WTC11 (cell line): ENCODE measurements at regions of chr18 and their contacts with region 1.

Region 1: GRCh38 chr18:46660955-46661749 is 4.1 kb upstream of the LOXHD1 start:
- DNase-seq: peak; percentile 67
- ATAC-seq: peak; percentile 62
- H3K4me3 Mint-ChIP-seq: no peak overlapping the region
- H3K27ac Mint-ChIP-seq: no peak overlapping the region
- H3K4me1 Mint-ChIP-seq: peaks cover 19% of the 10 kb centered on the region
- H3K27me3 Mint-ChIP-seq: peaks cover 7% of the 10 kb centered on the region
- CTCF ChIP-seq: no peak

Region 2: GRCh38 chr18:46148810-46149209 is 512.3 kb before region 1 on chr18:
- CTCF ChIA-PET with region 1: interaction called, 15 read pairs
- POLR2A ChIA-PET with region 1: no interaction called
- DNase-seq: peak; percentile 66
- ATAC-seq: peak; percentile 67
- H3K4me3 Mint-ChIP-seq: no peak overlapping the region
- H3K27ac Mint-ChIP-seq: 0 out of 2 replicates have a peak overlapping the region, but pooled peaks have one; percentile 20
- H3K4me1 Mint-ChIP-seq: peaks cover 29% of the 10 kb centered on the region
- H3K27me3 Mint-ChIP-seq: no peaks in the 10 kb centered on the region
- CTCF ChIP-seq: peak; percentile 68

Region 3: DNA sequence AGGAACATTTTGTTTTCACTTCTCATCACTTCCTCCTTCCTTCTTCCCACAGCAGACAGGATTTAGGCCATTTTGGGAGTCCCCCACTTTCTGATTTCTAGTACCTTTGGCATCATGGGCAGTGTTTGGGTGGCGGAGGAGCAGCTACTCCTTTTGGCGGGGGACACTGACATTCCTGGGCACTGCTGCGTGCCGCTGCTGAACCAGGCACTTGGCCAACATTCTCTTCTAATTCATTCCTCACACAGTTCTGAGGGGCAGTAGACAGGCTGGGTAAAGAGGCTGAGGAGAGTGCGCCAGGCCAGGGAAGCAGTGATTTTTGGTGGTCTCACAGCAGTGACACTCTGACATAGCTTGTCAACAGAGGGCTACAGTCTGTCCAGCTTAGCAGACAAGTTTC is 274.4 kb before region 1 on chr18:
- CTCF ChIA-PET with region 1: interaction called, 14 read pairs
- POLR2A ChIA-PET with region 1: no interaction called
- DNase-seq: no peak
- ATAC-seq: no peak
- H3K4me3 Mint-ChIP-seq: no peak overlapping the region
- H3K27ac Mint-ChIP-seq: no peak overlapping the region
- H3K4me1 Mint-ChIP-seq: peaks cover 6% of the 10 kb centered on the region; the same call in 1 of the 2 replicates
- H3K27me3 Mint-ChIP-seq: no peaks in the 10 kb centered on the region
- CTCF ChIP-seq: no peak

Region 4: GRCh38 chr18:46469186-46469915 is 191.8 kb before region 1 on chr18:
- CTCF ChIA-PET with region 1: interaction called, 14 read pairs
- POLR2A ChIA-PET with region 1: no interaction called
- DNase-seq: no peak
- ATAC-seq: no peak; the same call in 1 of the 2 replicates
- H3K4me3 Mint-ChIP-seq: no peak overlapping the region
- H3K27ac Mint-ChIP-seq: no peak overlapping the region; the same call in 1 of the 2 replicates
- H3K4me1 Mint-ChIP-seq: peaks cover 41% of the 10 kb centered on the region
- H3K27me3 Mint-ChIP-seq: peaks cover 4% of the 10 kb centered on the region; the same call in 1 of the 2 replicates
- CTCF ChIP-seq: no peak

Region 5: GRCh38 chr18:46563317-46563716 is 97.8 kb before region 1 on chr18:
- CTCF ChIA-PET with region 1: interaction called, 51 read pairs
- POLR2A ChIA-PET with region 1: no interaction called
- DNase-seq: peak; percentile 32
- ATAC-seq: peak; percentile 73
- H3K4me3 Mint-ChIP-seq: no peak overlapping the region
- H3K27ac Mint-ChIP-seq: no peak overlapping the region; the same call in 1 of the 2 replicates
- H3K4me1 Mint-ChIP-seq: peaks cover 17% of the 10 kb centered on the region
- H3K27me3 Mint-ChIP-seq: peaks cover 2% of the 10 kb centered on the region
- CTCF ChIP-seq: no peak

Region 6: DNA sequence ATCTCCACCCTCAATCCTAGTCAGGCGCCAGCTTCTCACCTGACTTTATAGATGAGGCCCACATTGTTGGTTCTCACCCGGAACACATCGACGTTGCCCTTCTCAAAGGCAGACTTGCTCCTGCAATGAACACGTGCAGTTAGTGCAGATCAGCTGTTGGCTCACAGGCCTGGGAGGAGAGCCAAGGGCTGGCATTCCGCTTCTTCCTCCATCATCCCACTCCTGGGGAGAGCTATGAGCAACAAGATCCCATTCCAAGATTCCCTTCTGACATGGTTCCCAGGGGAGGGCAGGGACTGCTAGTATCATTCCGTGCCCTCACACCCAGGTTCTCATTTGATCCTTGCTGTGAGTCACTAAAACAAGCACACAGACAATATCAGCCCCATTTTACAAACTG is 19.2 kb before region 1 on chr18:
- CTCF ChIA-PET with region 1: interaction called, 16 read pairs
- POLR2A ChIA-PET with region 1: interaction called, 3 read pairs
- DNase-seq: no peak
- ATAC-seq: no peak
- H3K4me3 Mint-ChIP-seq: no peak overlapping the region
- H3K27ac Mint-ChIP-seq: no peak overlapping the region
- H3K4me1 Mint-ChIP-seq: no peaks in the 10 kb centered on the region
- H3K27me3 Mint-ChIP-seq: peaks cover 5% of the 10 kb centered on the region; the same call in 1 of the 2 replicates
- CTCF ChIP-seq: no peak

Region 7: DNA sequence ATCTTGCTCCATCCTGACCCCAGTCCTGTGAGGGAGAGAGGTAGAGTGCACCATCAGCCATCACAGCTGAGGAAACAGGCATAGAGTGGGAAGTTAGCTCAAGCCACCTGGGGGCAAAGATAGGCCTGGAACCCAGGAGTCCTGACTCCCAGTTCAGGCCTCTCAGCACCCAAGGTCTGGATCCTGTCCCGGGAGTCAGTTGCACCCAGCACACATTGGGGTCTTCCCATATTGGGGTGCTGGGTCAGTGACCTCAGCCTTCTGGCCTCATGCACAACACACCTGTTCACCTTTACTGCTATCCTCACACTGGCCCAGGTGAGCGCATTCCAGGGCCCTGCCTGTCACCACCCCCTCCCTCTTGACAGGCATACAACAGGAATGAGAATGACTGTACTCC is 71.0 kb after region 1 on chr18:
- CTCF ChIA-PET with region 1: no interaction called
- POLR2A ChIA-PET with region 1: no interaction called
- DNase-seq: no peak
- ATAC-seq: no peak
- H3K4me3 Mint-ChIP-seq: no peak overlapping the region
- H3K27ac Mint-ChIP-seq: no peak overlapping the region
- H3K4me1 Mint-ChIP-seq: no peaks in the 10 kb centered on the region
- H3K27me3 Mint-ChIP-seq: no peaks in the 10 kb centered on the region; the same call in 1 of the 2 replicates
- CTCF ChIP-seq: no peak

Region 8: DNA sequence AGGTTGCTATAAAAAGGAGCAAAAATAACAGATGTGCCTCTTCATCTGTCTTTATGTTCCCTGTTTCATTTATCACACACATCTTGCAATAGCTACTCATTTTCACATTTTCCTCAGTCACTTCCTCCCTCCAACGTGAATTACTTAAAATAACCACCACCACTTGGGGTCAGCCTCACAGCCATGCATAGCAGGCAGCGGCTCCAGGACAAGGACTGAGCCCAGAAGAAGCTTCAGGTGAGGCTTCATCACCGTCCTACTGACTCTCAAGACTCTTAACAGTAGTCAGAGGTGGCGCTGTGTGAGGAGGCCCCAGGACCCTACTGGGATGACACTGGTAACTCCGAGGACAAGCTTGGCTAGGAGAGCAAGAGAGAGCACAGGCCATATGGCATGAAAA is 111.2 kb after region 1 on chr18:
- CTCF ChIA-PET with region 1: interaction called, 14 read pairs
- POLR2A ChIA-PET with region 1: no interaction called
- DNase-seq: no peak
- ATAC-seq: peak; percentile 77
- H3K4me3 Mint-ChIP-seq: no peak overlapping the region
- H3K27ac Mint-ChIP-seq: no peak overlapping the region
- H3K4me1 Mint-ChIP-seq: peaks cover 42% of the 10 kb centered on the region
- H3K27me3 Mint-ChIP-seq: peaks cover 3% of the 10 kb centered on the region; the same call in 1 of the 2 replicates
- CTCF ChIP-seq: no peak

Region 9: DNA sequence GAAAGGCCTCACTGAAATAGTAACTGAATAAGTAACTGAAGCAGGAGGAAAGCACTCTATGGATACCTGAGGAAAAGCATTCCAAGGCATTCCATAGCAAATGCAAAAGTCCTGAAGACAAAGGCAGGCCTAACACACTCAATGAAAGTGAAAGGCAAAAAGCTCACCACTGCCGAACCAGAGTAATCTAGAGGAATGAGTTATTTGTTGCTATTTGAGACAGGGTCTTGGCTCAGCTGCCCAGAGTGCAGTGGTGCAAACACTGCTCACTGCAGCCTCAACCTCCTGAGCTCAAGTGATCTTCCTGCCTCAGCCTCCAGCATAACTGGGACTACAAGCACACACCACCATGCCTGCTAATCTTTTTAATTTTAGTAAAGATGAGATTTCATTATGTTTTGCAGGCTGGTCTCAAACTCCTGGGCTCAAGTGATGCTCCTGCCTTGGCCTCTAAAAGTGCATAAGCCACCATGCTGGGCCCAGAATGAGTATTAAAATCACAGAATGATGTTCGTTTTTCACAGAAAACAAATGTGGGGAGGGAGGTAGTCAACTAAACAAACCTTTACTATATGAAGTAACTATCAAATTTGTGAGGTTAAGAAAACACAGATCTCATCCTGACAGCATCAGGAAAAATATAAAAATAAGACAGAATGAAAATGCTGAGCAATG is 238.3 kb after region 1 on chr18:
- CTCF ChIA-PET with region 1: no interaction called
- POLR2A ChIA-PET with region 1: no interaction called
- DNase-seq: peak; percentile 36
- ATAC-seq: peak; percentile 99
- H3K4me3 Mint-ChIP-seq: peak overlapping the region; percentile 26
- H3K27ac Mint-ChIP-seq: peak overlapping the region; percentile 98
- H3K4me1 Mint-ChIP-seq: peaks cover 40% of the 10 kb centered on the region
- H3K27me3 Mint-ChIP-seq: no peaks in the 10 kb centered on the region
- CTCF ChIP-seq: no peak